ENCODE measurements at regions of chr1 and their contacts with region 1.

Region 1: DNA sequence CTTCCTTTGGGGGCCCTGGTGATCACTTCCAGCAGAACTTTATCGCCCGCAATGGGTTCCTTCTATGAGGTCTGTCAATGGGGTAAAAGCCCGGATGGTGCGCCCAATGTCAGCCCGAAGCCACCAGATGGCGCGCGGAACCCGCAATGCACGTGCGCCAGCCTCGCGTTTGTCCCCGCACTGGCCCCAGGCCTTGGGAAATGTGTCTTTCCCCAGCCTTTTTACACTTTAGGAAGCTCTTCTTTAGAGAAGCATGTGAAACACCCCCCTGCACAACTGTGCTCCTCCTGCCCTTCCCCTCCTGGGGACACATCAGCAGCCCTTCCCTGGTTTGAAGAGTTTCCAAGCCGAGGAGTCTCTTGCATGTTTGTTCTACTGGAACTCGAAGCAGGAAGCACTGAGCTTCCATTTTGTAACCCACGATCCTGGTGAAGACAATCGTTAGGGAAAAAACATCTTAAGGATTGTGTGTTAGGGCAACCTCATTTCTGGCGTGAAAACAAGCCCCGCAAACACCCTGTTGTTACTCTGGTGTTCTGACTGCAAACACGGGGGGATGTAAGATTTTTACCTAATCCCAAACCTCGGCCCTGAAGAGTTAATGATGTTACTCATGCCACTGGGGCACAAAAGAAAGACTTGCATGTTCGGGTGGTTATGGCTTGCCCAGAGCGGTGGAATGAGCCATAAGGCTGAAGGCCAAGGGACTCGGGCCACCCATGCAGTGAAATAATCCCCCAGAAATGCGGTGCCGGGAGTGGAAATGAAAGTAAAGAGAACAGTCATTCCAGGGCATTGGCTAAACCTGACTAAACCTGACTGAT is 20.4 kb upstream of the TARBP1 start:
- DNase-seq: peak; percentile 92 to 95
- ATAC-seq: peak; percentile 79 to 90 (median 86)
- H3K4me3 ChIP-seq: peak overlapping the region; percentile 47
- H3K27ac ChIP-seq: peak overlapping the region; percentile 95
- H3K4me1 ChIP-seq: peaks cover 53% of the 10 kb centered on the region
- H3K27me3 ChIP-seq: no peaks in the 10 kb centered on the region
- CTCF ChIP-seq: peak; percentile 93

Region 2: GRCh38 chr1:234533975-234534876 is 34.9 kb after region 1 on chr1:
- intact Hi-C with region 1: loop called in 1 of 2 experiments (anchors 1 kb)
- DNase-seq: peak; percentile 92 to 94
- ATAC-seq: no peak
- H3K4me3 ChIP-seq: no peak overlapping the region
- H3K27ac ChIP-seq: peak overlapping the region; percentile 98
- H3K4me1 ChIP-seq: peaks cover 84% of the 10 kb centered on the region
- H3K27me3 ChIP-seq: no peaks in the 10 kb centered on the region
- CTCF ChIP-seq: no peak

Region 3: GRCh38 chr1:234550341-234551031 is 51.2 kb after region 1 on chr1:
- intact Hi-C with region 1: no loop called
- DNase-seq: no peak
- ATAC-seq: no peak
- H3K4me3 ChIP-seq: no peak overlapping the region
- H3K27ac ChIP-seq: no peak overlapping the region
- H3K4me1 ChIP-seq: peaks cover 10% of the 10 kb centered on the region
- H3K27me3 ChIP-seq: no peaks in the 10 kb centered on the region
- CTCF ChIP-seq: no peak

Region 4: GRCh38 chr1:234589854-234590620 is 90.7 kb after region 1 on chr1:
- intact Hi-C with region 1: loop called in 1 of 2 experiments (anchors 5 kb)
- DNase-seq: no peak
- ATAC-seq: peak; percentile 23 to 60 (median 44)
- H3K4me3 ChIP-seq: no peak overlapping the region
- H3K27ac ChIP-seq: peak overlapping the region; percentile 67
- H3K4me1 ChIP-seq: peaks cover 21% of the 10 kb centered on the region
- H3K27me3 ChIP-seq: no peaks in the 10 kb centered on the region
- CTCF ChIP-seq: no peak

Region 5: DNA sequence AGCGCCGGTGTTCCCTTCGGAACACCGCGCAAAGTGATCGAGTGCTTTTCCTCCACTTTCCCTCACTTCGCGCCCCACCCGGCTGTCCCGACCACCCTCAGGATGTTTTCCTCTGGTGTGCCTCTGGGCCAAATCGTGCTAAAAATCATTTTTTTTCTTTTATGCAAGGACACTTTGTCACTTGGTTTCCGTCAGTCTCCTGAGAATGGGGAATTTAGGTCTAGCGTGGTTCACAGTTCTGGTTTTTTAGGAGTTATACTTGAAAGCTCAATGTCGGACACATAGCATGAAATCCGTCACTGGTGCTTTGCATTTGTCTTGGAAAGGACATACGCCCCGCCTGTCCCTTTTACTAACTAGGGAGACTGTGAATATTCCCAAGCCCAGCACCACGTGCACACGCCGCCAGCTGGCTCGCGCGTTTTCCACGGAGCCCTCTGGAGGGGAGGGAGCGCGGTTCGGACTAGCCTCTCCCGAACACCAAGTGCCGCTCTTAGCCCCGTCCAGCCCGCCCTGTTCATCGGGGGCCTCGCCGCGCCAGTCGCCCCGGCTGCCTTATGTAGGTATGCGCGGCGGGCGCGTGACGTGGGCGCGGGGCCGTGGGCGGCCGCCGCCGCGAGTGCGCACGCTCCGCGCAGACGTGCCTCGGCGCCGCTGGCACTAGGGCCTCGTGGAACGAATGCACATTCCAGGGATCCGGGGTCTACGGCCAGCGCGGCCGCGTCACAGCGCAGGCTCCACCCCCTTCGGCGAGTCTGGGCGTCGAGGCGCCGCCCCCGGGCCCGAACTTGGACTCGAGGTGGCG is 111.2 kb after region 1 on chr1:
- intact Hi-C with region 1: loop called (anchors 2 to 5 kb)
- DNase-seq: peak; percentile 96 to 98
- ATAC-seq: peak; percentile 63 to 78 (median 72)
- H3K4me3 ChIP-seq: peak overlapping the region; percentile 72
- H3K27ac ChIP-seq: peak overlapping the region; percentile 99
- H3K4me1 ChIP-seq: peaks cover 36% of the 10 kb centered on the region
- H3K27me3 ChIP-seq: no peaks in the 10 kb centered on the region
- CTCF ChIP-seq: peak; percentile 6

Region 6: DNA sequence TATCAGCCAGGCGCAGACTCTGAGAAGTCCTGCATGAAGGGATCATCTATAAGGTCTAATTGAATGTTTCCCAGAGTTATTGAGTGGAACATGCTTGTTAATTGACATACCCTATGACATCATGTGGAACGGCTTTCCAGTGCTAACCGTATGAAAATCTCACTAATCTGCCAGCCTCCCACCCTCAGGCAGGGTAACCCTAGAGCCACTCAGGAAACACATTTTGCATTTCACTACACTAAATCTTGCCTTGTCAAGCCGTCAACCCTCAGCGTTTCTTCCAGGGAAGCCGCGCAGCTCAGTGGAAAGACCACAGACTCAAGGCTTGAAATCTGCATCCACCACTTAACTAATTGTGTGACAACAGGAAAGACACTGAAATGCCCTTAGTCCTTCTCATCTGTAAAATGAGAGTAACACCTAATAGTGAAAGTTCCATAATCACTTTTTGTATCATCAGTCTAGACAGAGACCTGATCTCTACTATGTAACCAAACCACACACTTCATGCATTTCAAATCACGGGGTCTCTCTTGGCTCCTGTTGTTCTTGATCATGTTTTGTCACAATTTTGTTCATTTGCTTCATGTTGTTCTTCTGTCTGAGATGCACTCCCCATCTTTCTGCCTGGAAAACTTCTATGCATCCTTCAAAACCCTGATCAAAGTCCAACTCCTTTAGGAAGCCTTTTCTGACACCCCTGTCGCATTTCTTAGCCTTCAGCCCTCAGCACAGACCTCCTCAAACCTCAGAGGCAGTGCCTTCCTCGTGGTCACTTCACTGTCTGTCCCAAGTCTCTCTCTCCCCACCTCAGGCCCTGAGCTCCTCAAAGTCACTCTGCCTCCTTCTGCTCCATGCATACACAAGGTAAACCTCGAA is 382.8 kb after region 1 on chr1:
- intact Hi-C with region 1: loop called in 1 of 2 experiments (anchors 5 kb)
- DNase-seq: no peak
- ATAC-seq: no peak
- H3K4me3 ChIP-seq: no peak overlapping the region
- H3K27ac ChIP-seq: no peak overlapping the region
- H3K4me1 ChIP-seq: peaks cover 34% of the 10 kb centered on the region
- H3K27me3 ChIP-seq: no peaks in the 10 kb centered on the region
- CTCF ChIP-seq: no peak

Region 7: GRCh38 chr1:234978397-234979295 is 479.3 kb after region 1 on chr1:
- intact Hi-C with region 1: loop called in 1 of 2 experiments (anchors 10 kb)
- DNase-seq: peak; percentile 54 to 77
- ATAC-seq: peak in 2 of 4 donors; percentile 15 to 39
- H3K4me3 ChIP-seq: no peak overlapping the region
- H3K27ac ChIP-seq: peak overlapping the region; percentile 86
- H3K4me1 ChIP-seq: peaks cover 63% of the 10 kb centered on the region
- H3K27me3 ChIP-seq: no peaks in the 10 kb centered on the region
- CTCF ChIP-seq: no peak

Region 8: DNA sequence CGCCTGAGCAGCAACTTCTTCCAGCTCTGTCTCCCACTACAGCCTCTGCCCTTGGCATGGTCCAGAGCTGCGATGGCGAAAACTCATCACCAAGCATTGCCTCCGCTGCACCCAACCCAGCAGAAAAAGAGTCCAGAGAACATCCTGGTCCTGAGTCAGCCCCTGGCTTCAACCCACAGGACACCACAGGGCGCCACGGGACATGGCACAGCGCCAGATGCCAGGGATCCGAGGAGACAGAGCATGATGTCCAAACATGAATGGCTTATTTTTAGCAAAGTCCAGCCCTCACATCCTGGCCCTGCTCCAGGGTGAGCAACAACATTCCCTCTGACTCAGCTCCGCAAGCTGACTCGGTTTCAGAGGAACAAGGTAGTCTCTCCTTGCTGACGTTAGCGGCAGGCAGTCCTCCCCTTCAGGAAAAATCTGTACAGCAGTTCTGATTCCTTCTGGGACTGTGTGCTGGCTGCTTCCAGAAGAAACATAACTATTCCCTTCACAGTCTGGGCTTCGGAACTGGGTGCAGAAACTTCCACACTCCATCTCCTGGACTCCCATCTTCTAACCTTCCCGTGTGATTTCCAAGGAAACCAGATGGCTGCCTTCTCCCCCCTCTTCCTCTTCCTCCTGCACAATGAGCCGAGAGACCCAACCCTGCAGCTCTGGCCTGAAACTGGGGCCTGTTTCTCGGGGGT is 498.0 kb after region 1 on chr1:
- intact Hi-C with region 1: loop called in 1 of 2 experiments (anchors 10 kb)
- DNase-seq: peak; percentile 100
- ATAC-seq: peak; percentile 90 to 95 (median 92)
- H3K4me3 ChIP-seq: peak overlapping the region; percentile 42
- H3K27ac ChIP-seq: peak overlapping the region; percentile 98
- H3K4me1 ChIP-seq: peaks cover 32% of the 10 kb centered on the region
- H3K27me3 ChIP-seq: no peaks in the 10 kb centered on the region
- CTCF ChIP-seq: no peak

Measured in psoas muscle (tissue), 8 donors.